ENCODE measurements at regions of chr12 and their contacts with region 1.

Region 1: DNA sequence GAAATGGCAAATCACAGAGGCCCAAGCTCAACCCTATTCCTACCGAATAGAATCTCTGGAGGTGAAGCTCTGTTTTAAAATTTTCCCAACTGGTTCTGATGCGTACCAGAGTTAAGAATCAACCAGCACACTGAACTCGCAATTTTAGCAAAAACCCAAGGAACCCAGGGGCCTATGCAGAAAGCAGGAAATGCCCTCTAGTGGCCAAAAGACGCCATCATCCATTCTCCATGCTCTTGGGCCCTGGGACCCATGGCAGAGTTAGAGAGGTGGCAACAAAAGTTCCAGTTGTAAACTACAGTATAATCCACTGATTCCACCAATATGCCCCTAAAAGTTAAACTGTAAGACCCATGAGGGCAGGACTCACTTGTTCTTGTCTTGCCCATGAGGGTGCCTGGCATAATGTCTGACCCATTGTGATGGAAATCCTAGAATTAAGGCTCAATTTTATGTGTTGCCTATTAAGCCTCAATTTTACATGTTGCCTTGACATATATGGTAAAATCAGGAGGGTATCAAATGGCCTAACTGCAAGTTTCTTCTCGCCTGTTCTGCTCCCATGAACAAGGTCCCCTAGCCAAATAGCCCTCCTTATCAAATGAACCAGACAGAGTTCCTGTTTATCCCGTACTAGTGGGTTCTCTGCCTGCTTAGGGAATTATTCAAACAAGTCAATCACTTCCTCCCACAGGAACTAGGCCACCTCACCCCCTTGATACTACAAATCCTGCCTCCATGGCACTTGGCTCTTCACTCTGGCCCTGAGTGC is 137.5 kb upstream of the CPM start:
- DNase-seq: peak; percentile 56 to 76 (median 68)
- H3K4me3 ChIP-seq: no peak overlapping the region
- H3K4me3 Mint-ChIP-seq: no peak overlapping the region
- H3K27ac ChIP-seq: no peak overlapping the region
- H3K27ac Mint-ChIP-seq: peak overlapping the region in 2 of 7 donors; percentile 27 to 44
- H3K4me1 ChIP-seq: no peaks in the 10 kb centered on the region
- H3K4me1 Mint-ChIP-seq: peaks cover 4% of the 10 kb centered on the region
- H3K27me3 ChIP-seq: no peaks in the 10 kb centered on the region
- H3K27me3 Mint-ChIP-seq: peaks cover 0 to 2% (median 0%) of the 10 kb centered on the region in 3 donors
- CTCF ChIP-seq: peak; percentile 86

Region 2: DNA sequence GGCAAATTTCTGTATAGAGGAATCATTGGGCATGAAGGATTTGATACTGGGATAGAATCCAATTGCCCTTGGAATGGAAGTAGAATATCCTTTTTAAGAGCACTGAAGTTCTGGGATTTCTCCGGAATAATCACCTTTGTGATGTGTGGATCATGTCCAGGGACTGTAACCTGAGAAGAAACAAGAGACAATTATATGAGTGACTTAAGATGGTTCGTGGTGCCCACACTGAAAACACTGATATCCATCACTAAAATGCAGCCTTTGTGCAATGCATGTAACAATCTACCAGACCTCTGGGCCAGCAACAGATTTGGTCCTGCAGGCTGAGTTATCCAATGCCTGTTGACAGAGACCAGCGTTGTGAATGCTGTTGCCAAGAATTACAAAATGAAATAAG is 214.0 kb before region 1 on chr12:
- intact Hi-C with region 1: loop called in 1 of 2 experiments (anchors 10 kb)
- DNase-seq: no peak
- H3K4me3 ChIP-seq: no peak overlapping the region
- H3K4me3 Mint-ChIP-seq: no peak overlapping the region
- H3K27ac ChIP-seq: no peak overlapping the region
- H3K27ac Mint-ChIP-seq: no peak overlapping the region
- H3K4me1 ChIP-seq: no peaks in the 10 kb centered on the region
- H3K4me1 Mint-ChIP-seq: no peaks in the 10 kb centered on the region
- H3K27me3 ChIP-seq: no peaks in the 10 kb centered on the region
- H3K27me3 Mint-ChIP-seq: no peaks in the 10 kb centered on the region
- CTCF ChIP-seq: no peak

Region 3: DNA sequence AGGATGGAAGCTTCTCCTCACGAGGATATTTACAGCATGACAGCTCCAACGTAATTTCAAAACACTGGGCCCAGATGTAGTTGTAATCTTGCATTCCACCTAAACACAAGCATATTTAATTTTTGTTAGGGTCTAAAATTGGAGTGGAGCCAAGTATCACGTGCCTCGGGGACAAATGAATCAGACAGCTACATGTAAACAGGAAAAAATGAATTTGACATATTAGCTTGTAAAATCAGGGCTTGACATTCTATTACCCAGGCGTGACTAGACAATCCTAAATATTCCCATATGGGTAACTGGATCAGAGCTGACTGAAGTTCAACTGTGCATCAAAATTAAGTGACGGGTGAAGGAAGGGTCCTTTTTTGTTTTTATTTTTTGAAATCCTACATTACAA is 203.6 kb before region 1 on chr12:
- intact Hi-C with region 1: loop called in 1 of 2 experiments (anchors 2 kb)
- DNase-seq: no peak
- H3K4me3 ChIP-seq: no peak overlapping the region
- H3K4me3 Mint-ChIP-seq: no peak overlapping the region
- H3K27ac ChIP-seq: no peak overlapping the region
- H3K27ac Mint-ChIP-seq: no peak overlapping the region
- H3K4me1 ChIP-seq: no peaks in the 10 kb centered on the region
- H3K4me1 Mint-ChIP-seq: no peaks in the 10 kb centered on the region
- H3K27me3 ChIP-seq: no peaks in the 10 kb centered on the region
- H3K27me3 Mint-ChIP-seq: no peaks in the 10 kb centered on the region
- CTCF ChIP-seq: no peak

Region 4: GRCh38 chr12:68962875-68963855 is 107.3 kb before region 1 on chr12:
- intact Hi-C with region 1: loop called in 1 of 2 experiments (anchors 5 kb)
- DNase-seq: peak; percentile 59 to 82 (median 81)
- H3K4me3 ChIP-seq: peak overlapping the region in 1 of 3 experiments; percentile 19
- H3K4me3 Mint-ChIP-seq: peak overlapping the region in 1 of 2 donors; percentile 73
- H3K27ac ChIP-seq: peak overlapping the region; percentile 76 to 86
- H3K27ac Mint-ChIP-seq: peak overlapping the region; percentile 92 to 98 (median 96)
- H3K4me1 ChIP-seq: peaks cover 53 to 56% of the 10 kb centered on the region in 2 donors
- H3K4me1 Mint-ChIP-seq: peaks cover 56% of the 10 kb centered on the region
- H3K27me3 ChIP-seq: no peaks in the 10 kb centered on the region
- H3K27me3 Mint-ChIP-seq: no peaks in the 10 kb centered on the region
- CTCF ChIP-seq: no peak

Region 5: GRCh38 chr12:69000540-69001243 is 69.8 kb before region 1 on chr12:
- intact Hi-C with region 1: no loop called
- DNase-seq: no peak
- H3K4me3 ChIP-seq: no peak overlapping the region
- H3K4me3 Mint-ChIP-seq: no peak overlapping the region
- H3K27ac ChIP-seq: no peak overlapping the region
- H3K27ac Mint-ChIP-seq: no peak overlapping the region
- H3K4me1 ChIP-seq: peaks cover 14% of the 10 kb centered on the region in 2 donors
- H3K4me1 Mint-ChIP-seq: peaks cover 14% of the 10 kb centered on the region
- H3K27me3 ChIP-seq: no peaks in the 10 kb centered on the region
- H3K27me3 Mint-ChIP-seq: peaks cover 0 to 2% (median 0%) of the 10 kb centered on the region in 3 donors
- CTCF ChIP-seq: no peak

Region 6: DNA sequence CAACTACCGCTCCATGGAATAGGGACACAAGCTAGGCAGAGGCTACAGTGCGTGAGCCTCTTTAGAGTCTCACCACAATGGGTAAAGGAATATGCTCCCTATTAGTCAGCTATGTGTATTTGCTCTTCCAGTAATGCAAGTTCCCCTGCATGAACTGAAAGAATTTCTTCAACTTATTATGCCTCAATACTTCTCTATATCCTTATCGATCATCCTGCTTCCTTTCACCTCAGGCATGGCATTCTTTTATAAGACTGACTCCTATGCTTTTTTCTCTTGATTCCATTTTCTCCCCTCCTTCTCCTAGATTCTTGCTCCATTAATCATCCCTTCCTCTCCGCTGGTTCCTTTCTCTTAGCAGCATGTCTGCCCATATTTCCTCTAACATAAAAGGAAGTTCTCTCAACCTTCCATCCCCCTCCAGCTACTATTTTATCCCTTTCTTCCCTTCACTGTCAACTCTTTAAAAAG is 43.1 kb before region 1 on chr12:
- intact Hi-C with region 1: no loop called
- DNase-seq: peak in 1 of 3 donors; percentile 20
- H3K4me3 ChIP-seq: no peak overlapping the region
- H3K4me3 Mint-ChIP-seq: no peak overlapping the region
- H3K27ac ChIP-seq: no peak overlapping the region
- H3K27ac Mint-ChIP-seq: peak overlapping the region; percentile 30 to 92 (median 58)
- H3K4me1 ChIP-seq: peaks cover 20% of the 10 kb centered on the region in 2 donors
- H3K4me1 Mint-ChIP-seq: peaks cover 25% of the 10 kb centered on the region
- H3K27me3 ChIP-seq: no peaks in the 10 kb centered on the region
- H3K27me3 Mint-ChIP-seq: peaks cover 0 to 2% (median 0%) of the 10 kb centered on the region in 3 donors
- CTCF ChIP-seq: no peak

Region 7: GRCh38 chr12:69083689-69084088 is 13.2 kb after region 1 on chr12:
- intact Hi-C with region 1: no loop called
- DNase-seq: no peak
- H3K4me3 ChIP-seq: no peak overlapping the region
- H3K4me3 Mint-ChIP-seq: no peak overlapping the region
- H3K27ac ChIP-seq: no peak overlapping the region
- H3K27ac Mint-ChIP-seq: no peak overlapping the region
- H3K4me1 ChIP-seq: no peaks in the 10 kb centered on the region
- H3K4me1 Mint-ChIP-seq: peaks cover 7% of the 10 kb centered on the region
- H3K27me3 ChIP-seq: no peaks in the 10 kb centered on the region
- H3K27me3 Mint-ChIP-seq: peaks cover 0 to 2% (median 1%) of the 10 kb centered on the region in 3 donors
- CTCF ChIP-seq: no peak